ENCODE measurements at regions of chr3 and their contacts with region 1.

Region 1: DNA sequence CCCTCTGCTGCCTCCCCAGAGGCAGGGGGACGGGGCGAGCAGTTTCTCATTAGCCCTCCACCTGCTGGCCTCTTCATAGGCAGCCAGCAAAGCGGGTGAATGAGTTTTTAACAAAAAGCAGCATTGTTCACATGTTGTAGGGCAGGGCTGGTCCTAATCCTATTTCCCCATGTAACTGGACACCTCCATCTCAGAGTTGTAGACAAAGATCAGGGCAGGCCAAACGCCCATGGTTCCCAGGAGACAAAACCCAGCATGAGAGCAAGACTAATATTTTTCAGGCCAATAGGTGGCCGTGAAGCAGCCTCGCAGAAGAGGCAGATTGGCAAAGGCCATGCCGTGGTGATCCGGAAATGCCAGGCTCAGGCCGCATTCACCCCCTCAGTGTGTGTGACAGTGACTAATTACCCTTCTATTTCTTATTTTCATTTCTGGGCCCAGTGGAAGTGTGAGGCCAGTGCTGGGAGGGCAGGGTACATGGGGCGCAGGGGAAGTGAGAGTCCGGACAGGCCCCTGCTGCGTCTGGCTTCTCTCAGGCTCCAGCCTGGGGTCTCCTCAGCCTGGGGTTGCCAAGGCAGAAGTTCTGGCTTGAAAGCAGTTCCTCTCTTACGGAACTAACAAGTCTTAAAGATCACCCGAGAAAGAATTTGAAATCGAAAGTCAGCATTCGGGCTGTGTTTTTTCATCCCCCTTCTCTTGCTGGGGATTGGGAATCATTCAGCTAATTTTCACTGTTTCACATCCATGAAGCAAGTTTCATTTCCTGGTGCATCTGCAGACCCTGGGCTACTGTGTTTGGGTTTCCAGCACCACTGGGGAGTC is 64.8 kb downstream of the BOC start:
- DNase-seq: peak in 1 of 5 donors; percentile 58
- ATAC-seq: peak in 3 of 4 donors; percentile 49 to 78 (median 76)
- H3K4me3 ChIP-seq: peak overlapping the region in 9 of 12 donors; percentile 2 to 43 (median 35)
- H3K27ac ChIP-seq: peak overlapping the region; percentile 18 to 86 (median 74)
- H3K4me1 ChIP-seq: peaks cover 0 to 27% (median 5%) of the 10 kb centered on the region in 12 donors
- H3K27me3 ChIP-seq: no peaks in the 10 kb centered on the region
- CTCF ChIP-seq: peak in 2 of 12 donors; percentile 6 to 16
- POLR2A ChIP-seq: no peak

Region 2: DNA sequence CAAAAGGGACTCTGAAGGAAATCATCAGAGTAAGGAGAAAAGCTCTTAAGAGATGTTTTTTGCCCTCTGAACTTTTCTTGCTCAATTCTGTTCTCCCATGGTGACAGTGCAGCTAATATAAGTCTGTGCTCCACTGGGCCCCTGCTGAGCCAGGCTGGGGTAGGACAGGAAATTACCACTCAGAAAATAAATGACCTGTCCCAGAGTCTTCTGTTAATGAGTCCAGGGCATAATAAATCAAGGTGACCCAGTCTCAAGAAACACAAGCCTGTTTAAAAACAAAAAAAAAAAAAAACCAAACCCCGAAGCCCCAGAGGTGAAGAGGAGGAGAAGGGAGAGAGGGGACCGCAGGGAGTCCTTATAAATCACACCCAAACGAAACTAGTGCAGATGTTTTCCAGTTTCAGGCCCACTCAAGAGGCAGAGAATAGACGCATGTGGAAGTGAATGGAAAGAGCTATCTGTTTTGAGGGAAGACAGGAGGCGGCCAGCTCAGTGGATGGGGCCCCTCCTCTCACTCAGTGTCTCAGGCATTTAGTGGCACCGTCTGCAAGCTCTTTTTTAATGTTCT is 124.6 kb before region 1 on chr3:
- intact Hi-C with region 1: loop called in 1 of 10 experiments (anchors 5 kb)
- DNase-seq: no peak
- ATAC-seq: peak in 3 of 4 donors; percentile 39 to 70 (median 59)
- H3K4me3 ChIP-seq: no peak overlapping the region
- H3K27ac ChIP-seq: peak overlapping the region in 10 of 12 donors; percentile 2 to 81 (median 56)
- H3K4me1 ChIP-seq: peaks cover 0 to 46% (median 7%) of the 10 kb centered on the region in 12 donors
- H3K27me3 ChIP-seq: no peaks in the 10 kb centered on the region
- CTCF ChIP-seq: no peak
- POLR2A ChIP-seq: no peak

Region 3: GRCh38 chr3:113712129-113712528 is 436.0 kb after region 1 on chr3:
- intact Hi-C with region 1: no loop called
- DNase-seq: no peak
- ATAC-seq: no peak
- H3K4me3 ChIP-seq: no peak overlapping the region
- H3K27ac ChIP-seq: no peak overlapping the region
- H3K4me1 ChIP-seq: peaks cover 0 to 3% (median 0%) of the 10 kb centered on the region in 12 donors
- H3K27me3 ChIP-seq: peaks cover 0 to 6% (median 0%) of the 10 kb centered on the region in 9 donors
- CTCF ChIP-seq: no peak
- POLR2A ChIP-seq: no peak